ENCODE measurements at regions of chr16 and their contacts with region 1.

Region 1: GRCh38 chr16:56425439-56425832 is at the start of gene AMFR:
- DNase-seq: peak; percentile 82
- ATAC-seq: peak; percentile 87
- H3K4me3 Mint-ChIP-seq: peak within 1 kb of the TSS; percentile 96
- H3K27ac Mint-ChIP-seq: peak within 1 kb of the TSS; percentile 95
- H3K4me1 Mint-ChIP-seq: peaks cover 44% of the 10 kb centered on the region
- H3K27me3 Mint-ChIP-seq: no peaks in the 10 kb centered on the region
- CTCF ChIP-seq: no peak
- total RNA-seq, gene AMFR: 118 and 134 TPM in 2 replicates

Region 2: GRCh38 chr16:55915096-55915827 is 510.2 kb before region 1 on chr16:
- CTCF ChIA-PET with region 1: no interaction called
- POLR2A ChIA-PET with region 1: no interaction called
- intact Hi-C with region 1: no loop called
- DNase-seq: no peak
- ATAC-seq: no peak
- H3K4me3 Mint-ChIP-seq: no peak overlapping the region
- H3K27ac Mint-ChIP-seq: no peak overlapping the region
- H3K4me1 Mint-ChIP-seq: no peaks in the 10 kb centered on the region
- H3K27me3 Mint-ChIP-seq: peaks cover 24% of the 10 kb centered on the region
- CTCF ChIP-seq: no peak

Region 3: DNA sequence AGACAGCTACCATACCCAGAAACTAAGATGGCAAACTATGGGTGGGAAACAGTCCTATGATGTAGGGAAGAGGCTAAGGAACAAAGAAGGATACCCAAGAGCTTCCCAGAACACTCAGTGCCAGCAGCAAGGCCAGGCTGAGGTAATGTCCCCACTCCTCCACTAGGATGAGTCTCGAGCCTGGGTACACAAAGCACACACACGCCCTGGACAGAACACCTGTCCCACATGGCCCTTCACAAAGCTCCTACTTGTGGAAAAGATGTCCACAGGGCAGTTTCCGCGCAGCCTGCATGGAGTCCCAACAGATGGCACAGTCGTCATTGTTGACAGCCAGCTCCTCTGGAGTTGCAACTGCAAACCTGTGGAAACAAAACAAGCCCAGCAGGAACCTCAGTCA is 24.0 kb before region 1 on chr16:
- CTCF ChIA-PET with region 1: interaction called, 4 read pairs
- POLR2A ChIA-PET with region 1: interaction called, 4 read pairs
- intact Hi-C with region 1: loop called (anchors 1 kb)
- DNase-seq: no peak
- ATAC-seq: peak; percentile 70
- H3K4me3 Mint-ChIP-seq: no peak overlapping the region
- H3K27ac Mint-ChIP-seq: peak overlapping the region; percentile 21
- H3K4me1 Mint-ChIP-seq: peaks cover 2% of the 10 kb centered on the region
- H3K27me3 Mint-ChIP-seq: no peaks in the 10 kb centered on the region
- CTCF ChIP-seq: no peak

Region 4: DNA sequence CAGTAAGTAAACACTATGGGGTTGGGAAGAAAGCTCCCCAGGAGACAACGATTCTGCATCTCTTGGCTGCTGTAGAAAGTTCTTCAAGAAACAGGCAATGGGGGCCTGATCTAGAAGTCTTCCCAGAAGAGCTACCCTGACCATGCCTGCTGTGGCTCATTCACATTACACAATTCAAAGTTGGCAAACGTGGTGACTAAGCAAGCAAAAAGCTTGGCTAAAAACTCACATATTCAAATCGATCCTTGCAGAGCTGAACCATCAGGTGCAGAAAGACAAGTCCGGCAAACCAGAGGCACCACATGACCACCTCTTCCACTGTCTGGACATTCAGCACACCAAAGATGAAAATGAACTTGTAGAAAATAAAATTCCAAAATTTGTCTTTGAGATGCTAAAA is 16.2 kb before region 1 on chr16:
- CTCF ChIA-PET with region 1: no interaction called
- POLR2A ChIA-PET with region 1: interaction called, 4 read pairs
- intact Hi-C with region 1: loop called (anchors 1 kb)
- DNase-seq: no peak
- ATAC-seq: no peak
- H3K4me3 Mint-ChIP-seq: no peak overlapping the region
- H3K27ac Mint-ChIP-seq: no peak overlapping the region
- H3K4me1 Mint-ChIP-seq: peaks cover 7% of the 10 kb centered on the region
- H3K27me3 Mint-ChIP-seq: no peaks in the 10 kb centered on the region
- CTCF ChIP-seq: no peak

Region 5: GRCh38 chr16:56450986-56451752 is 25.7 kb after region 1 on chr16 and contains the starts of genes NUDT21 and OGFOD1:
- CTCF ChIA-PET with region 1: interaction called, 4 read pairs
- POLR2A ChIA-PET with region 1: interaction called, 8 read pairs
- intact Hi-C with region 1: loop called (anchors 1 kb)
- DNase-seq: peak; percentile 73
- ATAC-seq: peak; percentile 99
- H3K4me3 Mint-ChIP-seq: peak within 1 kb of the TSS; percentile 99
- H3K27ac Mint-ChIP-seq: peak within 1 kb of the TSS; percentile 97
- H3K4me1 Mint-ChIP-seq: peaks cover 41% of the 10 kb centered on the region
- H3K27me3 Mint-ChIP-seq: no peaks in the 10 kb centered on the region
- CTCF ChIP-seq: no peak
- total RNA-seq, gene NUDT21: 108 and 111 TPM in 2 replicates
- total RNA-seq, gene OGFOD1: 45.6 and 51.8 TPM in 2 replicates

Region 6: GRCh38 chr16:56462064-56462796 is 36.8 kb after region 1 on chr16:
- CTCF ChIA-PET with region 1: no interaction called
- POLR2A ChIA-PET with region 1: no interaction called
- intact Hi-C with region 1: no loop called
- DNase-seq: no peak
- ATAC-seq: no peak
- H3K4me3 Mint-ChIP-seq: no peak overlapping the region
- H3K27ac Mint-ChIP-seq: no peak overlapping the region
- H3K4me1 Mint-ChIP-seq: no peaks in the 10 kb centered on the region
- H3K27me3 Mint-ChIP-seq: no peaks in the 10 kb centered on the region
- CTCF ChIP-seq: no peak

Region 7: DNA sequence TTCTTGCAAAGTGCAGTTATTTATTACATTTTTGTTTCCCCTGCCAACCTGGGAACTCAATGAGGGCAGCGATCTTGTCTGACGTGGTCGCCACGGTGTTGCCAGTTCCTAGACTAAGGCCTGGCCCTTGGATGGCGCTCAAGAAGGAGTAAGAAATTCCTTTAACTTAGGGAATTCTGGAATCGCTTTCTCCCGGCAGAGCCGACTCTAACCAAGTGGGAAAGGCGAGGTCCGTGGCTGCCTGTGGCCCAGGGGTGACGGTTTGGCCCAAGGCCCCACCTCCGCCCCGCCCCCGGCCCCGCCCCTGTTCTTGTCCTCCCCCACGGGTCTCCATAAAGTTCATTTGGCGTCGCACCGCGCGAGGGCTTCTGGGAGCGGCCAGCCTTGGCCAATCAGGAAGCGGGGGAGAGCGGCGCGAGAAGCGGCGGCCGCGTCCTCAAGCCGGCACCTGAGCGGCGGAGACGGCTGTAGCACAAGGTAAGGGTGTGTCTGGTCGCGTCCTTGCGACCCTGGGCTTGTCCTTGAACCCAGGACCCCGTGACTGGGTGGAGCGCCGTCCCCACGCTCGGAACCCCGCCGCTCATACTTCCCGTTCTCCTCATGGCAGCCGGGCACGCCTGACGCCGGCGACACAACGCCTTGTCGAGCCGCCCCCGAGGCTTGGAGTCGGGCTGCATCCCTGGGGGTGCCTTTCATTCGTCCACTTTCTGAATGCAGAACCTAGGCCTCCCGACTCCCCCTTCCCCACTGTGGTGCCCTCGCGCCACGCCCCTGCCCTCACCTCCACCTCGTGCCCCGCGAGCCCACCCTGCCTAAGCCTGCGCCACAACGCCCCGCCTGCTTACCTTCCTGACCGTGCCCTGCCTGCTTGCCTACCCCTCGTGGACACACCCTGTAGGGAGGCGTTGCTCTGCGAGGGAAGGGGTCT is 304.6 kb after region 1 on chr16 and contains the start of gene NUP93:
- CTCF ChIA-PET with region 1: no interaction called
- POLR2A ChIA-PET with region 1: no interaction called
- intact Hi-C with region 1: loop called (anchors 1 kb)
- DNase-seq: peak; percentile 79
- ATAC-seq: peak; percentile 89
- H3K4me3 Mint-ChIP-seq: peak within 1 kb of the TSS; percentile 90
- H3K27ac Mint-ChIP-seq: peak within 1 kb of the TSS; percentile 84
- H3K4me1 Mint-ChIP-seq: peaks cover 20% of the 10 kb centered on the region
- H3K27me3 Mint-ChIP-seq: no peaks in the 10 kb centered on the region
- CTCF ChIP-seq: no peak
- total RNA-seq, gene NUP93: 104 and 111 TPM in 2 replicates